ENCODE measurements at regions of chr19 and their contacts with region 1.

Region 1: GRCh38 chr19:53844849-53845246 is 20.7 kb upstream of the NLRP12 start:
- DNase-seq: no peak
- H3K4me3 ChIP-seq: no peak overlapping the region
- H3K27ac ChIP-seq: no peak overlapping the region
- H3K4me1 ChIP-seq: peaks cover 6% of the 10 kb centered on the region
- H3K27me3 ChIP-seq: peaks cover 8% of the 10 kb centered on the region
- CTCF ChIP-seq: no peak

Region 2: GRCh38 chr19:53879140-53880081 is 34.6 kb after region 1 on chr19:
- intact Hi-C with region 1: loop called (anchors 5 kb)
- DNase-seq: peak; percentile 94
- H3K4me3 ChIP-seq: peak overlapping the region; percentile 76
- H3K27ac ChIP-seq: no peak overlapping the region
- H3K4me1 ChIP-seq: peaks cover 29% of the 10 kb centered on the region
- H3K27me3 ChIP-seq: peaks cover 45% of the 10 kb centered on the region
- CTCF ChIP-seq: no peak

Region 3: DNA sequence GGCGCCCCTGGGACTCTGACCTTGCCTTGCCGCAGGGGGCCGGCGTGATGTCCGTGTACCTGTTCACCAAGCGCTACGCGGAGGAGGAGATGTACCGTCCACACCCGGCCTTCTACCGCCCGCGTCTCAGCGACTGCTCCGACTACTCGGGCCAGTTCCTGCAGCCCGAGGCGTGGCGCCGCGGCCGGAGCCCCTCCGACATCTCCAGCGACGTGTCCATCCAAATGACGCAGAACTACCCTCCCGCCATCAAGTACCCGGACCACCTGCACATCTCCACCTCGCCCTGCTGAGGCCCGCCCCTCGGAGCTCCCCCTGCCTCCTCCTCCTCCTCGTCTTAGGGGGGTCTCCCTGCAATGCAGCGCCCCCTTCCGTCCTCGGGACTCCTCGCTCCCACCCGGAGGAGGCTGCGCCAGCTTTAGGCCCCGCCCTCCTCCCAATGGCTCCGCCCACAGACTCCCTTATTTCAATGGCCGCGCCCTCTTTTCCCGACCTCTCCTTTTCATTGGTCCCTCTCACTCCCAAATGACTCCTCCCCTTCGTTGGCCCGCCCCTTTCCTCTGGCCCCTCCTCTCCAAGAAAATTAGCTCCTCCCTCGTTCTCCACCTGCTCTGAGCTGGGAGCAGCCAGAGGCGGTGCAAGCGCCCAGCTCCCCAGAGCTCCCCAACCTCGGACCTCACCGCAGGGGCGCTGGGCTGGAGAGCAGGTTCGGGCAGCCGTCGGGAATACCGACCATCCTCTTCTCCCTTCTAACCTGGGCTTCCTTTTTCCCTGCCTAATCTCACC is 97.3 kb after region 1 on chr19:
- intact Hi-C with region 1: no loop called
- DNase-seq: no peak
- H3K4me3 ChIP-seq: no peak overlapping the region
- H3K27ac ChIP-seq: no peak overlapping the region
- H3K4me1 ChIP-seq: no peaks in the 10 kb centered on the region
- H3K27me3 ChIP-seq: peaks cover 97% of the 10 kb centered on the region
- CTCF ChIP-seq: no peak